Activated B cell treated with CpG ODN at 0.5 μM for 24 hours (primary cell): ENCODE measurements at regions of chr17 and their contacts with region 1.

Region 1: GRCh38 chr17:74987418-74987908 is at the start of gene CDR2L:
- DNase-seq: peak; percentile 95
- ATAC-seq: peak; percentile 98
- H3K4me3 Mint-ChIP-seq: peak within 1 kb of the TSS; percentile 81
- H3K27ac Mint-ChIP-seq: peak within 1 kb of the TSS; percentile 64
- H3K4me1 Mint-ChIP-seq: peaks cover 12% of the 10 kb centered on the region
- H3K27me3 Mint-ChIP-seq: peaks cover 4% of the 10 kb centered on the region
- CTCF ChIP-seq: no peak
- total RNA-seq, gene CDR2L: not detected in 2 replicates

Region 2: DNA sequence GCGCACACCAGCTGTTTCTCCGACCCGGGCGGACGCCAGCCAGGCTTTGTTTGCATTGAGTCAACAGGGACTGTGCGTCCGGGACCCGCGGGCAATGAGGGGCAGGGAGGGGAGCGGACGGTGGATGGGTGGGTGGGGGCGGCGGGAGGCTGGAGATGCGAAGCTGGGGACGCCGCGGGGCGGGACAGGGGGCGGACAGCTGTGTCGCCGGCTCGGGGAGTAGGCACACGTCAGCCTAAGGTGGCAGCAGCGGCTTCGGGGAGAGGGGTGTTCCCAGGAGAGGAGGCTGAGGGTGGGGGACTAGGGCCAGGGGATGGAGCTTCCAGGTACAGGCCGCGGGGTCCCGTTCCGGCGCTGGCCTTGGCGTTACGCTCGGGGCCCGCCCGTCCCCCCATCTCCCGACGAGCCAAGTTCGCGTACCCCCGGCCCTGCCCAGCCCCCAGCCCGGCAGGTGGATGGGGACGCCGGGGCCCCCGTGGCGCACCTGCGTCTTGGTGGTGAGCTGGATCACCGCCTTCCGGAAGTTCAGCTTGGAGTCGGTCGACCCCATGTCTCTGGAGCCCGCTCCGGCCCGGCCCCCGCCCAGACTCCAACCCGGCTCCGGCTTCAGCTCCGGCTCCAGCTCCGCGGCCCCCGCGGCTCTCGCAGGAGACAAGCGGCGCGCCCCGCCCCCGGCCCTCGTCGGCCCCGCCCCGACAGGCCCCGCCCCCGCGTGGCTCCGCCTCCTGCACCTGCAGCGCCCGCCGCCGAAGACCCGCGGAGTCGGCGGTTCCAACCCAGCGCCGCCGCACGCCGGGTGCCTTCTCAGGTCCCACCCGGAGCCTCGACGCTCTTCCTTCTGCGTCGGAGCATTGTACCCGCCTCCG is 15.1 kb before region 1 on chr17 and contains the start of gene HID1:
- CTCF ChIA-PET with region 1: interaction called, 3 read pairs
- POLR2A ChIA-PET with region 1: interaction called, 3 read pairs
- intact Hi-C with region 1: loop called (anchors 1 kb)
- DNase-seq: peak; percentile 69
- ATAC-seq: peak; percentile 92
- H3K4me3 Mint-ChIP-seq: peak within 1 kb of the TSS; percentile 76
- H3K27ac Mint-ChIP-seq: peak within 1 kb of the TSS; percentile 2
- H3K4me1 Mint-ChIP-seq: peaks cover 6% of the 10 kb centered on the region
- H3K27me3 Mint-ChIP-seq: peaks cover 19% of the 10 kb centered on the region
- CTCF ChIP-seq: no peak
- total RNA-seq, gene HID1: 1.5 and 2.1 TPM in 2 replicates

Region 3: DNA sequence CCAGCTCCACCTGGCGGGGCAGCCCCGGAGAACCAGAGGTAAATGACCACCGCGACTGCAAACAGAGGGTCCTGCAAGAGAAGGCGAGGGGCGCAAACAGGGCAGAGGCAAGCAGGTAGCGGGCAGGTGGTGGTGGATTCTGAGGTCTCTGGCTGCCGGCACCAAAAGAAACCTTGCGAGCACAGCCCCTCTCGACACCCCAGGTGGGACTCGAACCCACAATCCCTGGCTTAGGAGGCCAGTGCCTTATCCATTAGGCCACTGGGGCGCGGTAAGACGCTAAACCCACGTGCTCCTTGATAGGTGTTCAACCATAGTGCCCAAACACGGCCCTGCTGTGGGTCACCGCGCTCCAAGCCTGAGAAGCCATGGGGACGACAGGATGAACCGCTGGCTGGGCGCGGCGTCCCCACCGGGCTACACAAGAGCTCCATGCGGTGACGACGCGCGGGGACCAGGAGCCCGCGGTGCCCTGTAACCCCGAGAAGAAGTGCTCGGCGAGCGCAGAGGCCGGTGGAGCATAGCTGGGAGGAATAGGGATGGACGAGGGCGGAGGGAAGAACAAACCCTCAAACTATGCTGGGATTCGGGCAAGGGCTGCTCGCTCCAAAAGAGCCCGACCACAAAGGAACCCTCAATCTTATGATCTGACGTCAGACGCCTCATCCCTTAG is 46.9 kb after region 1 on chr17:
- CTCF ChIA-PET with region 1: no interaction called
- POLR2A ChIA-PET with region 1: no interaction called
- intact Hi-C with region 1: loop called (anchors 1 kb)
- DNase-seq: peak; percentile 76
- ATAC-seq: peak; percentile 72
- H3K4me3 Mint-ChIP-seq: peak overlapping the region; percentile 91
- H3K27ac Mint-ChIP-seq: peak overlapping the region; percentile 89
- H3K4me1 Mint-ChIP-seq: peaks cover 34% of the 10 kb centered on the region
- H3K27me3 Mint-ChIP-seq: peaks cover 1% of the 10 kb centered on the region
- CTCF ChIP-seq: no peak

Region 4: DNA sequence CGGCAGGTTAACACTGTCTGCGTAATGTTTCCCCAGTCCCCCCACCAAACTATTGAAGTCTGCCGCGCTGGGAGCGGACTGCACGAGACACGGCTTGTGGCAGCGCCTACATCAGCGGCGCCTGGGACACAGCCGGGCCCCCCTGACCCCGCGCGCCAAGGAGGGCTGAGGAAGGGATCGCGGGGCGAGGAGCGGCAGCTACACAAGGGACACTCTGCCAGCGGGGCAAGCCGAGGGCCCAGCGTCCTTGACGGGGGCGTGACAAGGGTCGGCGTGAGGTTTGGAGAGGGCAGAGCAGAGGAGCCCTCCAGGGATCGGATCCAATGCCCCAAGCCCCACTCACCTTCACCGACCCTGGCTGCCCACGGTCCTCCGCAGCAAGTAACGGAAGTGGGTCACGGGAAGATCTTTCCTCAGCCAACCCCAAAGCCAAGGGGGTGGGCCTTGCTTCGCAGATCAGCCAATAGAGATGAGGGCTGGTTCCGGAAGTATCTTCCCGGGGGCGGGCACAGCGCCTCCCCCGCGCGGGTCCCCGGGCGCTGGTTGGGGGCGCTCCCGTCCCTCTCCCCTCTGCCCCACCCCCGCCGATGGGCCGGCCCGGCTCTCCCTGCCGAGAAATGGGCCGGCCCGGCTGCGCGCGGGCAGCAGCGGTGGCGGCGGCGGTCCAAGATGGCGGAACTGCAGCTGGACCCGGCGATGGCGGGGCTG is 59.3 kb after region 1 on chr17 and contains the starts of genes ATP5PD and KCTD2:
- CTCF ChIA-PET with region 1: no interaction called
- POLR2A ChIA-PET with region 1: no interaction called
- intact Hi-C with region 1: loop called (anchors 2 kb)
- DNase-seq: peak; percentile 91
- ATAC-seq: peak; percentile 95
- H3K4me3 Mint-ChIP-seq: peak within 1 kb of the TSS; percentile 97
- H3K27ac Mint-ChIP-seq: peak within 1 kb of the TSS; percentile 86
- H3K4me1 Mint-ChIP-seq: peaks cover 37% of the 10 kb centered on the region
- H3K27me3 Mint-ChIP-seq: no peaks in the 10 kb centered on the region
- CTCF ChIP-seq: no peak
- total RNA-seq, gene ATP5PD: 158 and 181 TPM in 2 replicates
- total RNA-seq, gene KCTD2: 19.5 and 20.2 TPM in 2 replicates